BJ (cell line): ENCODE measurements at regions of chr7 and their contacts with region 1.

Region 1: GRCh38 chr7:55255496-55256435 is 109.4 kb upstream of the LANCL2 start:
- DNase-seq: no peak
- H3K4me3 ChIP-seq: peak overlapping the region; percentile 52
- H3K27me3 ChIP-seq: no peaks in the 10 kb centered on the region
- CTCF ChIP-seq: peak; percentile 84

Region 2: DNA sequence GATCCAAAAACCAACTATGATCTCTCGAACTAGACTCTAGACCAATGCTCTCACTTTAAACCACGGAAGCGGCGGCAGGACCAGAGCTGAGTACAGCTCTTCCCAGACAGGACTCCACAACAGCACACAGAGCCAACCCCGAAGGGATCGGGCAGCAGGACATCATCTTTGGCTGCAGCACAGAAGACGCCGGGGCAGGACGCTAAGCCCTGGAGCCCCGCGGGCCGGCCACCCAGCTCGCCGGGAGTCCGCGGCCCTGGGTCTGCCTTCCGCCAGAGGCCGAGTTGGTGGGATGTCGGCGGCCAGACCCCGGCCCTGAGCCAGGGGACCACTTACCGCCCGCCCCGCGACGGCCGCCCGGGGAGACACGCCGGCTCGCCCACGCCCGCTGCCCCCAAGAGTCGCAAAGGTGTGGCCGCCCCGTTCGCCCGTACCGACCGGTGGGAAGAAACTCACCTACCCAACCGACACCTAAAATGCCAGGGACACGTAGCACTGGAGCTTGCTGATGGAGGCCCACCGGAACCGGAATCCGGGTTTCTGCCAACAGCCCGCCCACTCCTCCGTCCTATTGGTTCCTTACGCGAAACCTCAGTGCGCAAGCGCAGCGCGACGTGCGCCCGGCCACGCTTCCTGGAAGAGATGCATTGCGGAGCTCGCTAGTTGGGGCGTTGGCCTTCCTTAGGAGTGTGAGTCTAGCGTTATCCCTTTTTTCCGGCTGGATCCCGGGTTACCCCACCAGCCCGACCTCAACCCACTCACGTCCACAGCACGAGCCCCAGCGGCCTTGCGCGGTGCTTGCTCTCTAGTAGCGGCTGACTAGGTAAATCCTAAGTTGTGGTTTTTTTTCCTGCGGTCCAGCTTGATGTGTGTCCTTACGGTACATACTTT is 496.8 kb before region 1 on chr7 and contains the start of gene SEC61G:
- CTCF ChIA-PET with region 1: interaction called, 28 read pairs
- POLR2A ChIA-PET with region 1: no interaction called
- DNase-seq: peak; percentile 89
- H3K4me3 ChIP-seq: peak within 1 kb of the TSS; percentile 94
- H3K27me3 ChIP-seq: no peaks in the 10 kb centered on the region
- CTCF ChIP-seq: no peak
- polyA plus RNA-seq, gene SEC61G: 91.4 and 236 TPM in 2 replicates

Region 3: DNA sequence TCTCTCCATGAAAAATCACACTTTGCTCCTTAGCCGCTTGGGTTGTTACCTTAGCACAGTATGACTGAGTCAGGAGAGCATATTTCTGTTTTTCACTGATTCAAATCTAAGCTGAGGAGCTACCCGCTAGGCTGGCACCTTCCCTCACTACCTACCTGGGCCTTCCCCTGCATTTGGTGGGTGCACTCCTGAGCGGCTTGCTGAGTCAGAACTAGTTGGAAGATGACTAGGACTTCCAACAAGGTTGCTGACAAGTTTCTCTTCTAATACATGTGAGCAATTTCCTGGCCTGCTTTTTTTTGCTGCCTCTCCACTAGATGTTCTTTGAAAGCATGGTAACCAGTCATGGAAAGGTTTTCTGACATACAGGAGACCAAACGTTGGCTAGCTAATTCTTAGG is 452.9 kb before region 1 on chr7:
- CTCF ChIA-PET with region 1: interaction called, 22 read pairs
- POLR2A ChIA-PET with region 1: no interaction called
- DNase-seq: no peak
- H3K4me3 ChIP-seq: no peak overlapping the region
- H3K27me3 ChIP-seq: peaks cover 2% of the 10 kb centered on the region
- CTCF ChIP-seq: no peak

Region 4: GRCh38 chr7:54904130-54904529 is 351.6 kb before region 1 on chr7:
- CTCF ChIA-PET with region 1: interaction called, 17 read pairs
- POLR2A ChIA-PET with region 1: no interaction called
- DNase-seq: peak; percentile 98
- H3K4me3 ChIP-seq: no peak overlapping the region
- H3K27me3 ChIP-seq: no peaks in the 10 kb centered on the region
- CTCF ChIP-seq: no peak

Region 5: DNA sequence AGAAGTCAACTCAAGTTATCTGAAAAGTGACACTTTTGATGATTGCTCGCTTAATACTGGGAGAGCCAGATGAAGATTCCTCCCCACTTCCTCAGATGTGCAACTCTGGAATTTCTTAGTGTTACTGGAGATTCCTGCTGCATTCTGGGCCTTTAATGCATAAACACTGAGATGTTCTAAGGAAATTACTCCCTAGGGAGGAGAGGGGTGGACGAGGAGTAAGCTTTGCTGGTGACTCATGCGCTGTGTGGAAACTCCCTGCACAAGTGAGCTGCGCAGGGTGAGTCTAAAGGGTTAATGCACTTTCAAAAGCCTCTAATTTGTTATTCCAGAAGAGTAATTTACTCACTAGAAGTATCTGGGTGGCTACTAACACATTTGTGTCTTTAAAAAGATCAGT is 190.7 kb before region 1 on chr7:
- CTCF ChIA-PET with region 1: interaction called, 25 read pairs
- POLR2A ChIA-PET with region 1: no interaction called
- DNase-seq: peak; percentile 85
- H3K4me3 ChIP-seq: no peak overlapping the region
- H3K27me3 ChIP-seq: no peaks in the 10 kb centered on the region
- CTCF ChIP-seq: no peak

Region 6: GRCh38 chr7:55177589-55178261 is 78.0 kb before region 1 on chr7:
- CTCF ChIA-PET with region 1: interaction called, 14 read pairs
- POLR2A ChIA-PET with region 1: no interaction called
- DNase-seq: no peak
- H3K4me3 ChIP-seq: no peak overlapping the region
- H3K27me3 ChIP-seq: no peaks in the 10 kb centered on the region
- CTCF ChIP-seq: no peak

Region 7: DNA sequence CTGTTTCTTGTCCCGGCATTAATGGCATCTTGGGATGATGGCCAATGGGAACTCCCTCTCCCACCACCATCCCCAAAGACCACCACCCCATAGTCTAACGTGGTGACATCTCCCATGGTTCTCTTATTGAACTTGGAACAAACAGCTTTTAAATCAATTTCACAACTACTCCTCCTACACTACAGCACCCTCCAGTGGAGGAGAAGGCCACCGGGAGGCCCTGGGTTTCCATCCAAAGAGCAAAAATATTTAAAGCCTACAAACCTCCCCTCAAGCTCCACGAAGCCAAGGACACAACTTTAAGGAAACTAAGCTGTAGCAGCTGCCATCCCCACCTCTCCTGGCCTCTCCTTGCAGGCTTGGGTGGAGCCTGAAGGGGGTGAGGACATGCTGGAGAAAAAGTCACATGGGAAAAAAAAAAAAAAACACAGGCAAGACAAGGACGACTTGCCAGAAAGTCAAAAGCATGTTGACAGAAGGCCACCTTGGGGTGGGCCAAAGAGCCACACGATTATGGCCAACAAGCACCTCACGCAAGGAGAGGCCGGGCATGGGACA is 15.4 kb after region 1 on chr7:
- CTCF ChIA-PET with region 1: interaction called, 69 read pairs
- POLR2A ChIA-PET with region 1: no interaction called
- DNase-seq: no peak
- H3K4me3 ChIP-seq: no peak overlapping the region
- H3K27me3 ChIP-seq: peaks cover 24% of the 10 kb centered on the region
- CTCF ChIP-seq: peak; percentile 70